HAP-1 (cell line): ENCODE measurements at regions of chr12 and their contacts with region 1.

Region 1: DNA sequence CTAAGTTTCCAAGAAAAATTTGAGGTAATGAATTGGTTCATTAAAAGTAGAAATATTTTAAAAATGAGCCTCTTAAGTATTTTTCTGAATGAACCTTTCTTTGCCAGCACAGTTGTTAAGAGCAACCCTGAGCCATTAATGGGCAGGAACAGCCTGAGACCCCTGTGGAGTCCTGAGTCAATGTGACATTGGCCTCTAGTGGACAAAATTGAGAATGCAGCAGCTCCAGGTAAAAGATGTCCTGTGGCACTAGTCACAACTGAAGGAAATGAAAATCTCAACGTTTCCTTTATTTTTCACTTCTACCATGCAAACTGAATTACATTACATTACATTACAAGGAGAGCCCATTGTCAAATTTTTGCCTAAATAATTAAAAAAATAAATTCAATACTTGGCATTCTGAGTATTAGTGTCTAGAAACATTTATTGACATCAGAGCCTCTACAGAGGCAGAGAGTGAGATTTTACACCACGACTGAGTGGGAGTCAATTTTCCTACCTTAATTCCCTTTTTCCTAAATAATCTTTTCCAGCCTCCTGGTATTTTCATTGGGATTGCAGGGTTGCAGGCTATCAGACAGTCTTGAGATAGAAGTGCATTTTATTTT is 135.7 kb downstream of the PPM1H start:
- DNase-seq: peak; percentile 50 to 85
- H3K4me3 ChIP-seq: no peak overlapping the region
- H3K4me1 ChIP-seq: no peaks in the 10 kb centered on the region
- H3K27me3 ChIP-seq: no peaks in the 10 kb centered on the region

Region 2: GRCh38 chr12:61956545-61956944 is 842.7 kb before region 1 on chr12:
- in situ Hi-C with region 1: no loop called
- DNase-seq: no peak
- H3K4me3 ChIP-seq: no peak overlapping the region
- H3K4me1 ChIP-seq: no peaks in the 10 kb centered on the region
- H3K27me3 ChIP-seq: no peaks in the 10 kb centered on the region

Region 3: DNA sequence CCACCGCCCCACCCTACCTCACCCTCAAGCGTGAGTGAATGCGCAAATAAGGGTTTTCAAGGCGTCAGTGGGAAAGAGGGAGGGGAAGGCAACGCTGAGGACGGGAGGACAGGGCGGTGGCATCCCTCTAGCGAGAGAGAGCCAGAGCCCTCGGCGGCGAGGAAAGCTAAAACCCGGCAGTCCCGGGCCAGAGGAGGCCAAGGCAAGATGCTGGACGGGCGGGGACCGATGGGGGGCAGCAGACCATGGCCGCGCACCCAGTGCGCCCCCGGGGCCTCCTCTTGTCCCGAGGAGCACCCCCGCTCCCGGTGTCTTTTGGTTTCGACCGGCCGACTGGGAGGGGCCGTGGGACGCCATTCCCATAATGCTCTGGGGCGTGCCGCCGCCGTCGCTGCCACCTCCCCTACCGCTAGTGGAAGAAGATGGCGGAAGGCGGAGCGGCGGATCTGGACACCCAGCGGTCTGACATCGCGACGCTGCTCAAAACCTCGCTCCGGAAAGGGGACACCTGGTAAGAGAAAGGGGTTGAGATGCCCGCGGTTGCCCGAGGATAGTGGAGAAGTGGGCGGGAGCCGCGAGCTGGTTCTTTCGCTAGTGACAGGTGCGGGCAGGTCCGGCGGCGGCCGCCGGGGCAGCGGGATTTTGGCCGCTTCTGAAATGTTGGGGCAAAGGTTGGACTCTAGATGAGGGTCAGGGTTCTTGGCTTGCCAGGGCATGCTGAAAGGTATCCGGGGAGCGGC is 539.1 kb before region 1 on chr12 and contains the start of gene USP15:
- in situ Hi-C with region 1: loop called (anchors 25 kb)
- DNase-seq: peak; percentile 90 to 97
- H3K4me3 ChIP-seq: peak within 1 kb of the TSS; percentile 97
- H3K4me1 ChIP-seq: peaks cover 21% of the 10 kb centered on the region
- H3K27me3 ChIP-seq: no peaks in the 10 kb centered on the region

Region 4: DNA sequence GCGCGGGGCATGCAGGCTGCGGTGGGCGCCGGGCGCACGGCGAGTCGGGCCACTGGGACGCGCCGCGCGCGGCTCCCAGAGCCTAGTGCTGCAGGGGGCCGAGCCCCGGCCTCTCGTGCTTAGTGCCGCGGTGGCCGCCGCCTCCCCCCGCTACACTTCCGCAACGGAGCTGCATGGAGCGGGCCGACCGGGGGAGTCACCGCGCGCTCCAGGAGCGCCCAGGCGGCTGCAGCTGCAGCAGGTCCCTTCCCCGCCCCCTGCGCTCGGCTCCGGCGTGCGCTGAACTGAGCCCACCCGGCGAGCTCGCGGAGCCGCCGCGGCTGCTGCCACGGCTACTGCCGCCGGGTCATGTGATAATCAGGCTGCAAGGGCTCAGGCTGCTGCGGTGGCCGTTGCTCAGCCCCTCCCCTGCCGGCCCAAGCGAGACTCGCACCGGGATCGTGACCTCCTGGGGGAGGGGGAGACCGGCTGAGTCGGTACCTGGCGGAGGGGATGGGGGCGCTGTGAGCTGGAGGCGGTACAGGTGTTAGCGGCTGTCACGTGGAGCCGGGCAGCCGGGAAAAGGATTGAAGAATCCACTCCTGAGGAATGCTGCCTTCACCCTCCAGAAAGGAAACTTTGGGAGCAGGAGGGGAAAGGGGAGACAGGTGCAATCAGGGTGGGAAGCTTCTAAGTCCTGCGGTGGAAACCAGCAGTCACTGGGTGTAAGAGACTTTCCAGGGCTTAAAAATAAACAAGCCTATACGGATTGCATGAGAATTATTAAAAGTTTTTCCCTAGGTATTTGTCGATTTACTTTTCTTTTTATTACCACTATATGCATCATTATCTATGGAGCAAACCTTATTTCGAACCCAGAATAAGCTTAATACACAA is 135.8 kb after region 1 on chr12 and contains the start of gene PPM1H:
- in situ Hi-C with region 1: no loop called
- DNase-seq: peak; percentile 81 to 90
- H3K4me3 ChIP-seq: peak within 1 kb of the TSS; percentile 61
- H3K4me1 ChIP-seq: peaks cover 21% of the 10 kb centered on the region
- H3K27me3 ChIP-seq: 0 out of 2 replicates have a peak, but pooled peaks cover 4% of the 10 kb centered on the region

Region 5: DNA sequence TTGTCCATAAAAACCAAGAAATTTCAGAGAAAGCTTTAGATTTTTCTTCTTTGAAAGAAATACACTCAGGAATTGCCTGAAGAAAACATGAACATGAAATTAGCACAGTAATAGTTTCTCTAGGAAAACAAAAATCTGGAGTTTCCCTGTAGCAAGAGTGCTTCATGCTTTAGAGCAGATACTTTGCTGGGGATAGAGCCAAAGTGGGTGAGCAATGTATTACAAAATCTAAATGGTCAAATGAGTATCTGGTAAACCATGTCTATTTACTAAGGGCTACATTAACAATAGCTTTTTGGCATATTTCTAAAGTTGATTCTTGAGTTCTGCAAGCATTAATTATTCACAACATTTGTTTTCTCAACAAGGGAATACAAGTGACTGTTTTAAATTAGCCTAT is 325.5 kb after region 1 on chr12:
- in situ Hi-C with region 1: no loop called
- DNase-seq: no peak
- H3K4me3 ChIP-seq: no peak overlapping the region
- H3K4me1 ChIP-seq: no peaks in the 10 kb centered on the region
- H3K27me3 ChIP-seq: peaks cover 7% of the 10 kb centered on the region